MCF 10A (cell line): ENCODE measurements at regions of chr22 and their contacts with region 1.

Region 1: DNA sequence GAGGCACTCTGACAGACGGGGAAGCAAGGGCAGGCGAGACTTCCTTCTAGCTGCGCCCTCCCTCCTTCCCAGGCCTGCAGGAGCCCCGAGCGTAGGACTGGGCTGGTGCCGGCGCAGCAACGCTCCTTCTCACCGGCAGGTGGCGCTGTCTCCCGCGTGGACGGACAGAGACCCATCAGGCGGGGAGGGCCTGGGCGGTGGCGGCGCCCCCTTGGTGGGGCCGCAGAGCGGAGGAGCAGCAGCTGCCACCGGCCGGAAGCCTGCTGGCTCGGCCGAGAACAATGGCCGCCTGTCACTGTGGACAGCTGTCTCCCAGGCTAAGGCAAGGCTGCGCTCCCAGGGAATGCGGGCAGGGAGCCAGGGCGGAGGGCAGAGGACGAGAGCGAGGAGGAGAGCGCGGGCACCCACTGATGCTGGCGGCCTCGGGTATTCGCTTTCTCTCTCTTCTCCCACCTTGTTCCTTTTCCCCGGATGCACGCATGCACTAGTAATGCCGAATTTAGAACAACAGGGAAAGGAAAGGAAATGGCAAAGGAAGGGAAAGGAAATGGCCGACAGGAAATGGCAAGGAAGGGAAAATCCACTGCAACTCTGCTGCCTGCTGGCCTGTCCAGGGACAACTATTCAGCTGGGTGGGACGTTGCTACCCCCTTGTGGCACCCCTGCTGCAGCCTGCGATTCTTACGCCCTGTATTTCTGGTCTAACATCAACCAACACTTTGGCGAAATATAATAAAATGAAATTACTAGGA is 14.4 kb downstream of the PPM1F start:
- DNase-seq: peak; percentile 85
- H3K4me3 Mint-ChIP-seq: peak overlapping the region; percentile 82
- H3K27ac Mint-ChIP-seq: peak overlapping the region; percentile 92
- H3K4me1 Mint-ChIP-seq: peaks cover 43% of the 10 kb centered on the region
- H3K27me3 Mint-ChIP-seq: no peaks in the 10 kb centered on the region
- CTCF ChIP-seq: peak; percentile 99

Region 2: DNA sequence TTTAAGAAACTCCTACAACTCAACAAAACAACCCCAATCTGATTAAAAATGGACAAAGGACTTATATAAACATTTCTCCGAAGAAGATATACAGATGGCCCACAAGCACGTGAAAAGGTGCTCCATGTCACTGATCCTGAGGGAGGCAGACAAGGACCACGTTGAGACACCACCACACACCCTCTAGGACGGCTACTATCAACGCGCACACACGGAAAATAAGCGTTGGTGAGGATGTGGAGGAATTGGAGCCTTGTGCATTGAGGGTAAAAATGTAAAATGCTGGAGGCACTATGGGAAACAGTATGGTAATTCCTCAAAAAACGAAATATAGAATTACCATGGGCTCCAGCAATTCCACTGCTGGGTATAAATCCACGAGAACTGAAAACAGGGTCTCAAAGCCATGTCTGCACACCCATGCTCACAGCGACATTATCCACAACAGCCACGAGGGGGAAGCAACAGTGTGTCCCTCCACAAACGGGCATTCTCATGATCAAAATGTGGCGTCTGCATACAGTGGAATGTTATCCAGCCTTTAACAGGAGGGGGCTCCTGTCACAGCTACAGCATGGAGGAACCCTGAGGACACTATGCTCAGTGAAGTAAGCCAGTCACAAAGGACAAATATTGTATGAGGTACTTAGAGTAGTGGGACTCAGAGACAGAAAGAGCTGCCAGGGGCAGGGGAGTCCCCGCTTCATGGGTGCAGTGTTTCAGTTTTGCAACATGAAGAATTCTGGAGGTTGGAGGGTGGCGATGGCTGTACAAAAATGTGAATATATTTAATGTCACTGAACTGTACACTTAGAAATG is 225.1 kb before region 1 on chr22:
- CTCF ChIA-PET with region 1: interaction called, 7 read pairs
- POLR2A ChIA-PET with region 1: no interaction called
- intact Hi-C with region 1: loop called (anchors 5 kb)
- DNase-seq: peak; percentile 78
- H3K4me3 Mint-ChIP-seq: peak overlapping the region; percentile 39
- H3K27ac Mint-ChIP-seq: no peak overlapping the region
- H3K4me1 Mint-ChIP-seq: peaks cover 26% of the 10 kb centered on the region
- H3K27me3 Mint-ChIP-seq: no peaks in the 10 kb centered on the region
- CTCF ChIP-seq: peak; percentile 75

Region 3: DNA sequence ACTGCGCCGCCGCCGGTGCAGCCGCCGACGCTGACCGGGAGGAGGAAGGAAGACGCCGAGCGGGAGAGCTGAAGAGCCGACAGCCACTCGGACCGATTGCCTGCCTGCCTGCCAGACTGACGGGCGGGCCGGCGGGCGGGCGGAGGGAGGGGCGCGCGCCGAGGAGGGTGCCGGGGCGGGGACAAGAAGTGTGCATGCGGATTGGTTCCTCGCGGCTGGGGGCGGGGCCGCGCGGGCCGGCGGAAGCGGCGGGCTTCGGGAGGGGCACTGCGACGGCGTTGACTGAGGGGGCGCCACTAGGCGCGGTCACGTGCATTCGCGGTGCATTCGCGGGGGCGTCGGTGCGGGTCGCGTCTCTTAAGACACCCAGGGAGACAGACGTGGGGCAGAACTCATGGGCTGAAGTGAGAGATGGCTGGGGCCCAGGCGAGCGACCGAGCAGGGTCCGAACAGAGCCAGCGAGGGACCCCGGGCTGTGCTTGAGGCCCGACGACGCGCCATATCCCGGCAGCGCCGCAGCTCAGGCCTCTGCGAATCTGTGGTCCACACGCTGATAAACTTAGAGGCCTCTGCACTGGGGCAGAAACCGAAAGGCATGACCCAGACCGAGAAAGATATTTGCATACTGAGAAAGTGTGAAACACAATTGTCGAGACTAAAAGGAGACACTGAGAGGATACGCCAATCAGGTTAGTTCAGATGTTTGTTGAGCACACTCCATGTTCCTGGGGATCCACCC is 70.5 kb before region 1 on chr22 and contains the start of gene MAPK1:
- CTCF ChIA-PET with region 1: interaction called, 3 read pairs
- POLR2A ChIA-PET with region 1: interaction called, 4 read pairs
- intact Hi-C with region 1: loop called (anchors 2 kb)
- DNase-seq: peak; percentile 84
- H3K4me3 Mint-ChIP-seq: peak within 1 kb of the TSS; percentile 80
- H3K27ac Mint-ChIP-seq: peak within 1 kb of the TSS; percentile 91
- H3K4me1 Mint-ChIP-seq: peaks cover 34% of the 10 kb centered on the region
- H3K27me3 Mint-ChIP-seq: no peaks in the 10 kb centered on the region
- CTCF ChIP-seq: peak; percentile 17
- total RNA-seq, gene MAPK1: 123 and 145 TPM in 2 replicates

Region 4: DNA sequence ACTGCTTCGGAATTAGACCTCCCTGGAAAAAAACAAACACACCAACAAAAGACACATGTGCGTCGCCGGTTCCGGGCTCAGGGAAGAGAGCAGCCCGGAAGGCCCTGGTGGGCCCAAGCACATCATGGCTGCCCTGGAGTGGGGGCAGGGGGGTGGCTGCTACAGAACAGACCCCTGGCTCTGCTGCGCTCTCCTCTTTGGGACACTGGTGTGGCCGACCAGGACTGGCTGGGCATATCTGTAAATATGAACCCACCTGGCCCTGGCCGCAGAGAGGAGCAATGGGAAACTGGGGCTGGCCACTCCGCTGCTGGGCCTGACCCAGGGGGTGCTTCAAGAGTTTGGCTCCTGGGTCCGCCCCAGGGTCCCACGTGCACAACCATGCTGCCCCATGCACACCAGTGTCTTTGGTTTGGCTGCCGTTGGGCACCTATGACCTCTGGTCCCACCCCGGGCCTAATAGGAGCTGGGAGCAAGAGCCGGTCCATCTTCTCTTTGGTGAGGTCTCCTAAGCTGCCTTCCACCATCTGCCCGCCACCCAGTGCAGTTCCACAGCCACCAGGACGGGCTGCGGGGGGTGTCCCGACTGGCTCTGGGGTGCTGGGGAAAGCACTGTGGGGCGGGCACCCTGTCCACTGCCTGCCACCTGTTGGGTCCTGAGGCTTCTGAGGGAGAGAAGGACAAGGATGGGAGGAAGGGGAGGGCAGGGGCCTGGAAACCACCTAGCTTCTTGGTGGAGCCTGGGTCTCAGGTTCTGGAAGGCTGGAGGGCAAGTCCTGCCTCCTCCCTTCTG is 15.7 kb before region 1 on chr22:
- CTCF ChIA-PET with region 1: interaction called, 10 read pairs
- POLR2A ChIA-PET with region 1: interaction called, 3 read pairs
- intact Hi-C with region 1: no loop called
- DNase-seq: no peak
- H3K4me3 Mint-ChIP-seq: no peak overlapping the region
- H3K27ac Mint-ChIP-seq: no peak overlapping the region
- H3K4me1 Mint-ChIP-seq: no peaks in the 10 kb centered on the region
- H3K27me3 Mint-ChIP-seq: no peaks in the 10 kb centered on the region
- CTCF ChIP-seq: no peak

Region 5: GRCh38 chr22:21952586-21953571 is 14.6 kb after region 1 on chr22 and contains the start of gene PPM1F:
- CTCF ChIA-PET with region 1: interaction called, 65 read pairs
- POLR2A ChIA-PET with region 1: interaction called, 36 read pairs
- intact Hi-C with region 1: no loop called
- DNase-seq: peak; percentile 67
- H3K4me3 Mint-ChIP-seq: peak within 1 kb of the TSS; percentile 79
- H3K27ac Mint-ChIP-seq: peak within 1 kb of the TSS; percentile 51
- H3K4me1 Mint-ChIP-seq: peaks cover 6% of the 10 kb centered on the region
- H3K27me3 Mint-ChIP-seq: no peaks in the 10 kb centered on the region
- CTCF ChIP-seq: peak; percentile 86
- total RNA-seq, gene PPM1F: 32.2 and 32.6 TPM in 2 replicates